Right ventricle myocardium inferior (tissue), 1 donor: ENCODE measurements at regions of chr1 and their contacts with region 1.

Region 1: GRCh38 chr1:228109073-228109961 is at the start of gene MRPL55:
- DNase-seq: peak; percentile 99
- ATAC-seq: peak; percentile 96
- total RNA-seq, gene MRPL55: 57.0 TPM

Region 2: DNA sequence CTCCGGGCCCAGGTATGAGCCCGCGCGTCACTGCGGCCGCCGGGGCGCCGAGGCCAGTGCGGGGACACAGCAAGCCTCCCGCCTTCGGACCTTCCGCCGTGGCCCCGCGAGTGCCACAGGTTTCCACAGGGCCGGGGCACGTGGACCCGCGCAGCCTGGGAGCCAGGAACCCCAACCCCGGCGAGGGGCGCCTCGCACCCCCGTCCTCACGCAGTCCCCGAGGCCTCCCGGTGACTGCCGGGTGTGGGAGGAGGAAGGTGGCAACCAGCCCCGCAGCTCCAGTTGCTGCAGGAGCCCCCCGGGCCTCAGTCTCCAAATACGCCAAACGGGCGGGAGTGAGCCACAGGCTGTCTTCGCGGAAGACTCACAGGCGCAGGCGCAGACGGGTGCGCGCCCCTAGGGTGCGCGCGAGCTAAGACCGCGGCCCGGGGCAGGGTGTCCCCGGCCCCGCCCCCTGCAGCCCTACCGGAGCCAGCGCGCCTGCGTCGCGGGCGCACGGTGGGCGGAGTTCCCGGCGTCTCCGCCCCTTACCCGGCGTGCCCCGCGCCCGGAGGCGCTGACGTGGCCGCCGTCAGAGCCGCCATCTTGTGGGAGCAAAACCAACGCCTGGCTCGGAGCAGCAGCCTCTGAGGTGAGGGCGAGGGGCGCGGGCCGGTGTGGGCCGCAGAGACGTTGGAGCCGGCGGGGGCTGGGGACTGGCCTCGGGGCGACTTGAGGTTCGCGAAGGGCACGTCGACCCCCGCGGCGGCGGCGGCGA is 27.0 kb before region 1 on chr1 and contains the start of gene ARF1:
- intact Hi-C with region 1: loop called (anchors 2 kb)
- DNase-seq: peak; percentile 97
- ATAC-seq: peak; percentile 97
- total RNA-seq, gene ARF1: 281 TPM

Region 3: DNA sequence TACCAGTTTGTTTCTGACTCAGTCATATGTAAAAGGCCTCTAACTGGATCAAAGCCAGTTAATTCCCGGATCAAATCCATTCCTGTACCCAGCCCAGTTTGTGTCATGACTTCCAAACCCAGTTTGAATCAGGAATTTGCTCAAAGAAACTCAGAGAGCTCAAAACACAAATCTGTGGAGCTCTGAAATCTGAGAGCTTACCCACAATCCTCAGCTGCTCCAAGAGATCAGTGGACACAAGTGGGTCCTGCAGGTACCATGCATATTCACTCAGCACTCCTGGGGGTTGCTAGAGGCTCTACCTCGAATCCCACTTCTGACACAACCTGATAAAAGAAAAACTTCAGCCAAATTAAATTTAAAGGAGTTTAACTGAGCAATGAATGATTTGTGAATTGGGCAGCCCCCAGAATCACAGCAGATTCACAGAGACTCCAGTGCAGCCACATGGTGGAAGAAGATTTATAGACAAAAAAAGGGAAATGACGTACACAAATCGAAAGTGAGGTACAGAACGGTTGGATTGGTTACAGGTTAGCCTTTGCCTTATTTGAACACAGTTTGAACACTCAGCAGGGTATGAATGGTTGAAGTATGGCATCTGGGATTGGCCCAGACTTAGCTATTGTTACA is 11.7 kb after region 1 on chr1:
- intact Hi-C with region 1: no loop called
- DNase-seq: no peak
- ATAC-seq: no peak

Region 4: DNA sequence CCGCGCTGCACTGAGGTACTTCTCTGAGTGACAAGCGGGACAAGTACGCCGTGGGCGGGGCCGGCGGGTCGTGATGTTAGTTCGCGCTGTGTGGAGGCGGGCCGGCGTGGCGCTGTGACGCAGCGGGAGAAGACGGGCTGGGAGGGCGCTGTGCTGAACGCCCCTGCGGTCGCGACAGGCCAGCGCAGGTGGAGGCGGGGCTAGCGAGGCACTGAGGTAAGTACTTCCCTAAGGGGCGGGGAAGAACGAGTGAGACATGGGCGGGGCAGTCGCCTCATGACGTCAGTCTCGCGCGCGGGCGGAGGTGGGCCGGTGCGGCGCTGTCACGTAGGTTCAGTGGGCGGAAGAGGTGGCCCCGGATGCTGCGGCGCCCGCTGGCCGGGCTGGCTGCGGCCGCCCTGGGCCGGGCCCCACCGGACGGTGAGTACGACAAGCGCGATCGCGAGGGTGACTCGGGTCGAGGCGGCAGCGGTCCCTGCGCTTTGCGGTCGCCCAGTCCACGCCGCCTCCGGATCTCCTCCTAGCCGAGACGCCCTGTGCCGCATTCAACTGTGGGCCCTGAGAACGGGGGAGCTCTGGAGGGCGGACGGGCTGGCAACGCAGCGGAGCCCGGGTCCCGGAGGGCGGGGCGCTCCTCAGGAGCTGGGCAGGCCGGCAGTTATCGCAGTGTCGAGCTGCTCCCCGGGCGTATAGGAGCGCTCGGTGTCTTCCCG is 30.8 kb after region 1 on chr1 and contains the start of gene GUK1:
- intact Hi-C with region 1: loop called (anchors 2 kb)
- DNase-seq: peak; percentile 100
- ATAC-seq: peak; percentile 95
- total RNA-seq, gene GUK1: 162 TPM